Tibial artery (tissue), 4 donors: ENCODE measurements at regions of chr20 and their contacts with region 1.

Region 1: DNA sequence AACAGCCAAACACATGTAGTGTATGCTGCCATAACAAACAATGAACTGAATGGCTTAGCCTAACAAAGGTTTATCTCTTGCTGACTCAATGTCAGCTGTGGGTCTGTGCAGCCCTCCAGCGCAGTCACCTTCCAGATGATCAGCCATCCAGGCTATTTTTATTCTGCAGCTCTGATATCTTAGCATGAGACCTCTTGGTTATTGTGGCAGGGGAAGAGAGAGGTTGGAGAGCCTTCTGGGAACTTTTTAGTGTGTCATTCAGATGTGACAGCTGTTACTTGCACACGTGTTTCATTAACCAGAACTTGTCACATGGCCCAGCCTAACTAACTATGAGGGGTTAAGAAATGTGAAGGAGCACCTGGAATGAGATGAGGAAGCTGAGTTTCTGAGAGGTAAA is 202.5 kb downstream of the DHX35 start:
- DNase-seq: no peak
- H3K4me3 ChIP-seq: no peak overlapping the region
- H3K27ac ChIP-seq: no peak overlapping the region
- H3K4me1 ChIP-seq: no peaks in the 10 kb centered on the region
- H3K27me3 ChIP-seq: peaks cover 0 to 3% of the 10 kb centered on the region in 2 donors
- CTCF ChIP-seq: no peak

Region 2: DNA sequence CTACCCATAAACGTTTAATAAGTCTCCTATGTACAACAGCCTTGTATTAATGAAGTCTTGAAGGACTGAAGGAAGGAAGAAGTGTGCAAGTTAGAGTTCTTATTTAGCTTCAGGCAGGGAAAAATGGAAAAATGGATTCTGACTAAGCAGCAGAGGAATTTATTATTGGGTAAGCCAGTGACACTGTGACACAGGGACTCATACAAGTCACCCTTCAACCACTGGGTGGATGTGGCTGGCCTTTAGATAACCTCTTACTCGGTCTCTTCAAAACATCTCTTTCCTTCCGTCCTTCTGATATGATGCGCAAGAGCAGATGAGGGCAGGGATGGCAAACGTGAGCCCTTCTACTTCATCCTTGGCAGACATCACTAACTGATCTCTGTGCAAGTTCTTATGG is 56.9 kb before region 1 on chr20:
- intact Hi-C with region 1: loop called (anchors 2 kb)
- DNase-seq: no peak
- H3K4me3 ChIP-seq: no peak overlapping the region
- H3K27ac ChIP-seq: no peak overlapping the region
- H3K4me1 ChIP-seq: no peaks in the 10 kb centered on the region
- H3K27me3 ChIP-seq: peaks cover 0 to 33% of the 10 kb centered on the region in 2 donors
- CTCF ChIP-seq: no peak

Region 3: DNA sequence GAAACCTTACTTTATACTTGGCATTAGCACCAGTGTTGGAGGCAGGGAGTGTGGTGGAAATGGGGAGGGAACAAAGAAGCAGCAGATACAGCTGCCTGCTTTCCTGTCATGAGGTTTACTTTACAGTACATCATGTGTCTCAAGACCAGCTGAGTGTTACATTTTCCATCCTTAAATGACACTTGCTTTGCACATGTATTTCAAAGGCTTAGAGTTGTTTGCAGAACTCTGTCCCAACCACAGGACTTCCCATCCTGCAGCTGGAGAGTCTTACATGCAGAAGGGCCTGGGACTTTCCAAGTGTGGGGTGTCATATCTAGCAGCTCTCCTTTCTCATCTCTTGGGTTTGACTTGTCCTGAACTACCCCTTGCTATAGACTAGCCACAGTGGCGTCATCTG is 193.4 kb after region 1 on chr20:
- intact Hi-C with region 1: no loop called
- DNase-seq: peak in 1 of 2 donors; percentile 55
- H3K4me3 ChIP-seq: no peak overlapping the region
- H3K27ac ChIP-seq: no peak overlapping the region
- H3K4me1 ChIP-seq: peaks cover 0 to 9% (median 0%) of the 10 kb centered on the region in 4 donors
- H3K27me3 ChIP-seq: no peaks in the 10 kb centered on the region
- CTCF ChIP-seq: no peak